ENCODE measurements at regions of chr15 and their contacts with region 1.

Region 1: GRCh38 chr15:67863442-67863987 is 23.7 kb upstream of the RNU6-1 start:
- DNase-seq: peak; percentile 69 to 88
- H3K4me3 ChIP-seq: peak overlapping the region; percentile 40 to 48
- H3K27ac ChIP-seq: peak overlapping the region; percentile 48 to 60
- H3K4me1 ChIP-seq: peaks cover 0 to 15% (median 11%) of the 10 kb centered on the region in 4 donors
- H3K27me3 ChIP-seq: no peaks in the 10 kb centered on the region
- CTCF ChIP-seq: peak; percentile 95 to 97

Region 2: DNA sequence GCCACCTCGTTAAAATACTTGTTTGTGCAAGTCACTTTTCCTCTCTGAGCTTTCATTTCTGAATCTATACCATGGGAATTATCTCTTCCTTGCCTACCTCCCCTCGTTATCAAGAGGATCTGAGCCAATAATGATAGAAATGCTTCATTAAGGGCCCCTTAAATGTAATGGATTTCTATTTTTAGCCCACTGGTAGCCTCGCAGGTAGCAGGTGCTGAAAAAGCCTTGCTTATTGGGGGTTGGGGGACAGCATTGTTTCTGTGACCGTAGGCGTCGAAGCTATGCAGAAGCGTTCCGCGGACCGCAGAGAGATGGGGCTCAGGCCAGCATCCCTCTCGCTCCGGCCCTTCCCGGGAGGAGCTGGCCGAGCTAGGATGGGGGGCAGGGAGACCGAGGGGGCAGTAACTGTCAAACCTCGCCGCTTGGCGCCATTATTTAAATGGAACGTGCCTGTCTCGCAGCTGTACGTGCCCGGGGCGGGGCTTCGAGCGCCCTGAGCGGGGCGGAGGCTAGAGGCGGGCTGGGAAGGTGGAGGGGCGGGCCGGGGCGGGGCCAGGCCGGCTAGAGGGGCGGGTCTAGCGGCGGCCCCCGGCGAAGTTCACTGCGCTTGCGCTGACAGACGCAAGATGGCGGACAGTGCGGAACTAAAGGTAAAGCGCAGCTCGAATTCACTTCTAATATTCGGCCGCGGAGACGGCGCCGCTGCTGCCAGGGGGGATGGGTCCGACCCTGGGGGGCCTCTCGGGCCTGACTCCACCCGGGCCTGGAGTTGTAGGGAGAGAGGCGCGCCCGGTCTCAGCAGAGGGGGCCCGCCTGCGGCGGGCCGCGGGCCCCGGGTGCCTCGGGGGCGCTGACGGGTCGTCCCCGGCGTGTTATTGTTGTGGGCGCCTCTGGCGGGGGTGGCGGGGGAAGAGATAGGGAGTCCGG is 190.4 kb after region 1 on chr15 and contains the start of gene PIAS1:
- intact Hi-C with region 1: loop called (anchors 10 kb)
- DNase-seq: peak; percentile 95 to 96
- H3K4me3 ChIP-seq: peak within 1 kb of the TSS; percentile 97 to 98
- H3K27ac ChIP-seq: peak within 1 kb of the TSS; percentile 92 to 94
- H3K4me1 ChIP-seq: peaks cover 0 to 37% (median 19%) of the 10 kb centered on the region in 4 donors
- H3K27me3 ChIP-seq: no peaks in the 10 kb centered on the region
- CTCF ChIP-seq: no peak

Region 3: DNA sequence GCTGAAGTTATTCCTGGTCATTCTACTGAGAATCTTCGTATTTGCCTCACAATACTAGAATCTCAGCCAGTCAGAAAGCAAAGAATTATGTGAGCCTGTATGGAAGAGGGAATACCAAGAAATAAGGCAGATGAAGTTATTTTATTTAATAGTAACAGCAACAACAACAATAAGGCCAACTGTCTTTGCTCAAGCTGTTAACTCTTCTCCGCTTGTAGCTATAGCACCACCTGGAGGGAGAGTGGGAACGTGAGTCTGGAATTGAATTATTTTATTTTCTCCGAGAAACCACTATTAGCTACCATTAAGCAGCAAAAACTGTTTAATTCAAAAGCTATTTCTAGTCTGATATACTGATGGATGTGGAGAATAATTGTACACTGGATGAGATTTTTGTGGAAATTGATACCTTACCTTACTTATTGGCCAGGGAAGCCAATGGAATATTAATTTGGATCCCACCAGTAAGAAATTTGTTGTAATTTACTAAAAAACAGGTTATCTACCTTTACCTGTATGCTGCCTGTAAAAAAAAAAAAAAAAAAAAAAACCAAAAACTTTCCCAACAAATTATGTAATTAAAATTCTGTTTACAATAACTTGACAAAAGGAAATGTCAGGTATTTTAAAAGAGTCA is 291.5 kb after region 1 on chr15:
- intact Hi-C with region 1: loop called (anchors 2 kb)
- DNase-seq: peak in 1 of 2 donors; percentile 37
- H3K4me3 ChIP-seq: no peak overlapping the region
- H3K27ac ChIP-seq: no peak overlapping the region
- H3K4me1 ChIP-seq: peaks cover 0 to 36% (median 3%) of the 10 kb centered on the region in 4 donors
- H3K27me3 ChIP-seq: no peaks in the 10 kb centered on the region
- CTCF ChIP-seq: peak; percentile 65 to 77

Region 4: GRCh38 chr15:68204776-68205557 is 341.5 kb after region 1 on chr15 and contains the start of gene CALML4:
- intact Hi-C with region 1: loop called (anchors 5 kb)
- DNase-seq: peak in 1 of 2 donors; percentile 66
- H3K4me3 ChIP-seq: peak within 1 kb of the TSS; percentile 1 to 3
- H3K27ac ChIP-seq: no peak within 1 kb of the TSS
- H3K4me1 ChIP-seq: peaks cover 0 to 29% (median 11%) of the 10 kb centered on the region in 4 donors
- H3K27me3 ChIP-seq: peaks cover 0 to 5% of the 10 kb centered on the region in 2 donors
- CTCF ChIP-seq: no peak